Activated naive CD4-positive, alpha-beta T cell treated with anti-CD3 and anti-CD28 coated beads, Interleukin-2, amount 10 ng/mL, durations not matched to agents 7 days and 5 days (primary cell): ENCODE measurements at regions of chr3 and their contacts with region 1.

Region 1: GRCh38 chr3:46297658-46298463 is 55.6 kb downstream of the CCR3 start:
- DNase-seq: no peak
- H3K4me3 Mint-ChIP-seq: peak overlapping the region; percentile 17
- H3K27ac Mint-ChIP-seq: peak overlapping the region; percentile 92
- H3K4me1 Mint-ChIP-seq: peaks cover 93% of the 10 kb centered on the region
- H3K27me3 Mint-ChIP-seq: no peaks in the 10 kb centered on the region

Region 2: DNA sequence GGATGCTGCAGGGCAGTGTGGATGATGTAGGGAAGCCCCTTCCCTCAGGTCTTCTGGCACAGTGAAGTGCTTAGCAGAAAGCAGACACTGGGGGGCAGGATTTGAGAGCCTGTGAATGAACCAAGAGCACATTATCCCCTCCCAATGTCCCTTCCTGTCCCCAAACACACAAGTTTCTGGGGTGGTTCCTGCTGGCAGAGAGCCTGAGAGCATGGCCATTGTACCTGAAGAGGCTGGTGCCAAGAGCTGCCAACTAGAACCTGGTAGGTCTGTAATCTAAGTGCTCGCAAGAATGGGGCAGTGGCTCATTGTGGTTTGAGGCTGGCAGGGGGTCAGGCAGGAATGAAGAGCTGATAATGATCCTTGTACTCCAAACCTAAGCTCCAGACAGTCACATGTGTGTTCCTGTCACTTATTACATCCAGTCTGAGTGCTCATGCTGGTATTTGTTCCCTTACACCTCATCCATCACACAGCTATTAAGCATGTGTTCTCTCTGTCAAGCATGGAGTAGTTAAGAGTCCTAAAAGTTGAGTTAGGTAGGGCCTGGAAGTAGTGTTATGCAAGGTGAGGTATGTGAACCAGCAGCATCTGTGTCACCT is 83.0 kb before region 1 on chr3:
- CTCF ChIA-PET with region 1: interaction called, 10 read pairs
- DNase-seq: peak; percentile 40
- H3K4me3 Mint-ChIP-seq: no peak overlapping the region
- H3K27ac Mint-ChIP-seq: no peak overlapping the region
- H3K4me1 Mint-ChIP-seq: peaks cover 21% of the 10 kb centered on the region
- H3K27me3 Mint-ChIP-seq: peaks cover 8% of the 10 kb centered on the region